Activated T-helper 2 cell treated with anti-CD3 and anti-CD28 coated beads, Interferon-gamma antibody, Interleukin-2, Interleukin-4, amounts not matched to agents 10 μg/mL and 5 μg/mL and 100 μg/mL, durations not matched to agents 14 hours and 24 hours and 36 hours (primary cell): ENCODE measurements at regions of chrX and their contacts with region 1.

Region 1: DNA sequence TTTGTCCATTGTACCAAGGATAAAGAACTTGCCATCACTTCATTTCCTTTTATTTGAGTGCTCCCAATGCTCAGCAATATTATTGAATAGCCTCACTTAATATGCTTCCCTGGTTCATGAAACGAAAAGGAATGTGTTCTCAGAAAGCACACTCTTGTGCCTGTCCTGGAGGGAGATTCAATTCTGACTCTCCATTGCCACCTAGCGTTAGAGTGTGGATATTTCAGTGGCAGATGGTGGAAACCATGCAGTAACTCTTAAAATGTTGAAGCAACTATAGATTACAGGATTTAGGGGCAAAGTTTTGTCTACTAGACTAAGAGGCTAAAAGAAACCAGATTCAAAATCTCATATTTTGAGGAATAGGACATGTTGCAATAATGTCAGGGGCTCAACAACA is 36.0 kb downstream of the GAB3 start:
- DNase-seq: peak; percentile 34
- H3K4me3 Mint-ChIP-seq: no peak overlapping the region
- H3K27ac Mint-ChIP-seq: no peak overlapping the region
- H3K4me1 Mint-ChIP-seq: peaks cover 63% of the 10 kb centered on the region
- H3K27me3 Mint-ChIP-seq: no peaks in the 10 kb centered on the region

Region 2: DNA sequence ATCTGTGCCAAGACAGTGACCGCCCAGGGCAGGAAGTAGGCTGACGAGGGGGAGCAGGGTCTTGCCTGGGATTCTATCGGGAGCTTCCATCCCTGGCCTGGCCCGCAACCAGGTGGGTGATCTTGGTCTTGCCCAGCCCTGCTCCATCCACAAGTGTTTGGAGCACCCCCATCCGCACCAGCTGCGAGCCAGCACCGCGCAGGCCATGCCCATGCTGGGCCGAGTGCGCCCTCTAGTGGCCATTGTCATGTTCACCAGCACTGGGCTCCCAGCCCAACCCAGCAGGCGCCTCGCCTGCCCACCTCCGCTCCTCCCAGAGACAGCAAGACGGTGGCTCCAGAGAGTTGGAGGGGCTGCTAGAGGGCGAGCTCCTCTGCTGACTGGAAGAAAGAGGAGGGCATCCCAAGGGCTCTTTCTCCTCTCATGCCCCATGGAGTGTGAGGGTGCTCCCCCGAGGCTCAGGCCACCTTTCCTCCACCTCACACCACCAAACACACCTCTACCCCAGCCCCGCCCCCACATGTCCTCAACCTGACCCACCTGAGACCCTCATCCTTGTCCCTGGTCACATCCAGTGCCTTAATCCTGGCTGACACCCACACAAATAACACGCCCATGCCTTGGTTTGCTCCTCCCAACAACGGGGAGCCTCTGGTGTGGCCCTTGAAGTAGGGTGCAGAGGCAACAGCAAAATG is 1207.3 kb before region 1 on chrX:
- intact Hi-C with region 1: no loop called
- DNase-seq: peak; percentile 68
- H3K4me3 Mint-ChIP-seq: no peak overlapping the region
- H3K27ac Mint-ChIP-seq: no peak overlapping the region
- H3K4me1 Mint-ChIP-seq: no peaks in the 10 kb centered on the region
- H3K27me3 Mint-ChIP-seq: no peaks in the 10 kb centered on the region

Region 3: GRCh38 chrX:154695911-154696675 is 18.8 kb before region 1 on chrX:
- intact Hi-C with region 1: loop called (anchors 2 kb)
- DNase-seq: no peak
- H3K4me3 Mint-ChIP-seq: no peak overlapping the region
- H3K27ac Mint-ChIP-seq: peak overlapping the region; percentile 61
- H3K4me1 Mint-ChIP-seq: peaks cover 15% of the 10 kb centered on the region
- H3K27me3 Mint-ChIP-seq: no peaks in the 10 kb centered on the region

Region 4: GRCh38 chrX:154734061-154734781 is 19.3 kb after region 1 on chrX:
- intact Hi-C with region 1: loop called (anchors 1 kb)
- DNase-seq: peak; percentile 11
- H3K4me3 Mint-ChIP-seq: peak overlapping the region; percentile 64
- H3K27ac Mint-ChIP-seq: peak overlapping the region; percentile 85
- H3K4me1 Mint-ChIP-seq: peaks cover 86% of the 10 kb centered on the region
- H3K27me3 Mint-ChIP-seq: no peaks in the 10 kb centered on the region

Region 5: GRCh38 chrX:154748712-154749343 is 33.9 kb after region 1 on chrX:
- intact Hi-C with region 1: loop called (anchors 2 kb)
- DNase-seq: peak; percentile 31
- H3K4me3 Mint-ChIP-seq: peak overlapping the region; percentile 26
- H3K27ac Mint-ChIP-seq: no peak overlapping the region
- H3K4me1 Mint-ChIP-seq: peaks cover 25% of the 10 kb centered on the region
- H3K27me3 Mint-ChIP-seq: peaks cover 5% of the 10 kb centered on the region

Region 6: DNA sequence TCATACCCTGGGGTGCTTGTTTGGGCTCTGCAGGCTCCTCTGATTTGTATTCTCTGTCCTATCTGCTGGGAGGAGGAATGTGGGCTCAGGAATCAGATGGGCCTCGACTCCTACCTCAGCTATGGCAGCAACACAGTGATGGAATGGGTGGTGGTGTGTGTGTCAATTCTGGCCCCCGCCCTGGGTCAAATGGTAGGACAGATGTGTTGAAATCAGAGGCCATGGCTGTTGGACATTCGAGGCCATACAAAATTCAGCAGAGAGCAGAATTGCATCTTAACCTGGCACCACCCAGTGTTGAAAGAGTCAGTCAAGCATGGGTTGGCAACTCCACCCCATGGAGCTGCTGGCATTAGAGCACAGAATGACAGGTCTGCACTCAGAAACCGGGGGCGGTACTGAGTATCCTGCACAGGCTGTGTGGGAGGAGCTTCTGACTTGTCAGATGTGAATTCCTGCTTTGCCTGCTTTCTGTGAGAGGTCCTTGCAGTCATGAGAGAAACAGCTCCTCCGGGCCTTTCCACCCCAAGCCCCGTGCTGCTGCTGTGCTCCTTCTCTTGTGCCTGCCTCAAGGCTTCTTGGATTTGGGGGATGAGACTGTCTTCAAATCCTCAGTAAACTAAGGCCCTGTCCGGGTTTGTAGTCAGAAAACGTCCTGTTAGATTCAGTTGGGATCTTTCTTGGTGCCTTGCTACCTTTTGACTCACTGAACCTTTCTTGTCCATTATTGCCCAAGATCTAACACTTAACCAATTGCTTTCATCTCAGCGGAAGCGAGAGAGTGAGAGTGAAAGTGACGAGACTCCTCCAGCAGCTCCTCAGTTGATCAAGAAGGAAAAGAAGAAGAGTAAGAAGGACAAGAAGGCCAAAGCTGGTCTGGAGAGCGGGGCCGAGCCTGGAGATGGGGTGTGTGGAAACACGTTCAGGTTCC is 60.8 kb after region 1 on chrX:
- intact Hi-C with region 1: no loop called
- DNase-seq: no peak
- H3K4me3 Mint-ChIP-seq: peak overlapping the region; percentile 5
- H3K27ac Mint-ChIP-seq: peak overlapping the region; percentile 67
- H3K4me1 Mint-ChIP-seq: peaks cover 29% of the 10 kb centered on the region
- H3K27me3 Mint-ChIP-seq: no peaks in the 10 kb centered on the region

Region 7: GRCh38 chrX:154804957-154805695 is 90.2 kb after region 1 on chrX and contains the start of gene MPP1:
- intact Hi-C with region 1: loop called (anchors 5 kb)
- DNase-seq: peak; percentile 75
- H3K4me3 Mint-ChIP-seq: peak within 1 kb of the TSS; percentile 82
- H3K27ac Mint-ChIP-seq: peak within 1 kb of the TSS; percentile 72
- H3K4me1 Mint-ChIP-seq: peaks cover 36% of the 10 kb centered on the region
- H3K27me3 Mint-ChIP-seq: no peaks in the 10 kb centered on the region
- total RNA-seq, gene MPP1: 27.7 and 31.5 TPM in 2 replicates

Region 8: DNA sequence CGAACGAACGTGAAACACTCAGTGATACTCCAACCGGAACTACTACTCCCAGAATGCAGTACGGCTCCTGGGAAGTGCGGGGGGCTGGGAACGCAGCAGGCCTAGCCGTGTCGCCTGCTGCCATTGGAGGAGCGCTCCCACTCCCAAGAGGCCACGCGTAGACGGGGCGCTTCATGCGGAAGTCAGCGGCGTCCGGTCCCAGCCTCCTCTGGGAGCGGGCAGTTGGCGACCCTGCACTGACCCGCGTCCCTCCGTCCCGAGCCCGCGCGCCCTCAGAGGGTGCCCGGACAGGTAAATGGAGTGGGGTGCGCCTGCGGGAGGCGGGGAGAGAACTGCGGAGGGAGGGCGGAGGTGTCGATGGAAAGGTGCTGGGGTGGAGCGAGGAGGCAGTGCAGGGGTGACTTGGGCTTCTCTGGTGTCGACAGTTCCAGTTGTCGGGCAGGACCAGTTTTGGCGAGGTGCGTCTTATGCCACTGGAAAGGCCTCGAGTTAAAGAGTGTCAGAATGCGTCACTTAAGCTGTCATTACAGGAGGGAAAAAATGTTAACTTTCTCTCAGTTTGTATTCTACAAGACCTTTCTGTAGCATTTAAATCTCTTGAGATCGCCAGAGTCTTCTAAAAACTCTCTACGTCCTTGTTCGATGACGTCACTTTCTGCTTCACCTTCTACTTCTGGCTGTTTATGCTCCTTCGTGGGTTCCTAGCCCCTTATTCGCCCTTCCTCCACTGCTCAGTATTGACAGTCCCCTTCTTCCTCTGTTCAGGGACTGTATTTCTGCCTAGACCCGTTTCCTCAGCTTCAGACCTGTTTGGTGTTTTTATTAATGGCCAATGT is 1166.5 kb after region 1 on chrX and contains the start of gene VAMP7:
- intact Hi-C with region 1: loop called (anchors 5 kb)
- DNase-seq: peak; percentile 76
- H3K4me3 Mint-ChIP-seq: peak within 1 kb of the TSS; percentile 90
- H3K27ac Mint-ChIP-seq: peak within 1 kb of the TSS; percentile 90
- H3K4me1 Mint-ChIP-seq: peaks cover 20% of the 10 kb centered on the region
- H3K27me3 Mint-ChIP-seq: no peaks in the 10 kb centered on the region
- total RNA-seq, gene VAMP7: 31.0 and 31.5 TPM in 2 replicates